ENCODE measurements at regions of chr6 and their contacts with region 1.

Region 1: GRCh38 chr6:70686548-70687133 is 19.0 kb downstream of the SMAP1 start:
- DNase-seq: peak; percentile 16
- H3K4me3 ChIP-seq: no peak overlapping the region
- H3K27ac ChIP-seq: no peak overlapping the region
- H3K4me1 ChIP-seq: no peaks in the 10 kb centered on the region
- H3K27me3 ChIP-seq: no peaks in the 10 kb centered on the region
- CTCF ChIP-seq: peak; percentile 55 to 75

Region 2: GRCh38 chr6:70304616-70305015 is 382.0 kb before region 1 on chr6:
- CTCF ChIA-PET with region 1: no interaction called
- dilution Hi-C with region 1: no loop called
- in situ Hi-C with region 1: loop called in 1 of 2 experiments (anchors 10 kb)
- intact Hi-C with region 1: no loop called
- DNase-seq: no peak
- H3K4me3 ChIP-seq: no peak overlapping the region
- H3K27ac ChIP-seq: no peak overlapping the region
- H3K4me1 ChIP-seq: no peaks in the 10 kb centered on the region
- H3K27me3 ChIP-seq: peaks cover 51% of the 10 kb centered on the region
- CTCF ChIP-seq: no peak

Region 3: GRCh38 chr6:70547313-70547712 is 139.3 kb before region 1 on chr6:
- CTCF ChIA-PET with region 1: no interaction called
- dilution Hi-C with region 1: no loop called
- in situ Hi-C with region 1: no loop called
- intact Hi-C with region 1: loop called (anchors 1 kb)
- DNase-seq: no peak
- H3K4me3 ChIP-seq: no peak overlapping the region
- H3K27ac ChIP-seq: no peak overlapping the region
- H3K4me1 ChIP-seq: no peaks in the 10 kb centered on the region
- H3K27me3 ChIP-seq: no peaks in the 10 kb centered on the region
- CTCF ChIP-seq: peak; percentile 23 to 50

Region 4: DNA sequence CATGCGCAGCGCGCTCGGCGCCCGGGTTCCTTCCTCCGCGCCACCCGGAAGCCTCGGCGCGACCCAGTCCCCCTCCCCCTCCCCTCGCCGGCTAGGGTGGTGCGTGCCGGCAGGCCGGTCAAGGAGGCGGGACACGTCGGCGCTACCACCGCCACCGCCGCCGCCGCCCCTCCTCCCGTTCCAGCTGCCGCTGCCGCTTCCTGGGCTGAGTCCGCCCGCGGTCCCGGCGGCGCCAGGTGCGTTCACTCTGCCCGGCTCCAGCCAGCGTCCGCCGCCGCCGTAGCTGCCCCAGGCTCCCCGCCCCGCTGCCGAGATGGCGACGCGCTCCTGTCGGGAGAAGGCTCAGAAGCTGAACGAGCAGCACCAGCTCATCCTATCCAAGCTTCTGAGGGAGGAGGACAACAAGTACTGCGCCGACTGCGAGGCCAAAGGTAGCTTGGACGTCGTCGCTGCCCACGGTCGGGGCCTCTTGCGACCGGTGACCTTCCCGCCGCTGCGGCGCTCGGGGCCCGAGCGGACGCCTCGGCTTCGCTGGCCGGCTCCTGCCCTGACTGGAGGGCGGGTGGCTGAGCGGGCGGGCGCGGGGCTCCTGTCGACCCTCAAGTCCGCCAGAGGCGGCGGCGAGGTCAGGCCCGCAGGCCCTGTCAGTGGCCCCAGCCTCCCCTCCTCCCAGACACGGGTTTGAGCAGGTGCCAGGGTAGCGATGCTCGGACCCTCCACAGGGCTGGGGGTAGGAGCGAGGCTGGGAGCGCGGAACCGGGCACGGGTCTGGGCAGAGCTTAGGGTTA is 18.7 kb before region 1 on chr6 and contains the start of gene SMAP1:
- CTCF ChIA-PET with region 1: no interaction called
- dilution Hi-C with region 1: no loop called
- in situ Hi-C with region 1: no loop called
- intact Hi-C with region 1: loop called (anchors 2 kb)
- DNase-seq: peak; percentile 90
- H3K4me3 ChIP-seq: peak within 1 kb of the TSS; percentile 77 to 97 (median 92)
- H3K27ac ChIP-seq: peak within 1 kb of the TSS; percentile 45
- H3K4me1 ChIP-seq: peaks cover 13% of the 10 kb centered on the region
- H3K27me3 ChIP-seq: no peaks in the 10 kb centered on the region
- CTCF ChIP-seq: no peak
- total RNA-seq, gene SMAP1: 20.2 to 22.1 TPM

Region 5: DNA sequence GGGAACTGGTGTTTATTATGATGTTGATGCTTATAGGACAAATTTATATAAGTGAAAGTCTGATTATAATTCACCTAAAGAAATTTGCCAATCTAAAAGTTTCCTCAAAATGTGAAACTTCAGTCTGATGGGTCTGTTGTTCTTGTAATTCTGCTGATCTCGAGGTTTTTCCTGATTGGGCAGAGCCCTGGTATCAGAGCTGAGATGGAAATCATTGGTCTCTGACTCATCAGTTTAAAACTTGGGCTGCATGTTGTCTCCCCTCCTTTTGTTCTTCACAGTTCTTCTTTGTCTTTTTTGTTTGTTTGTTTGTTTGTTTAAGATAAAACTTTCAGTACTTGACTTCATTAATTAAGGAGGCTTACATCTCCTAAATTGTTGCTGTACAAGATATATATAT is 13.0 kb before region 1 on chr6:
- CTCF ChIA-PET with region 1: interaction called, 20 read pairs
- dilution Hi-C with region 1: no loop called
- in situ Hi-C with region 1: no loop called
- intact Hi-C with region 1: loop called (anchors 2 kb)
- DNase-seq: peak; percentile 26
- H3K4me3 ChIP-seq: no peak overlapping the region
- H3K27ac ChIP-seq: no peak overlapping the region
- H3K4me1 ChIP-seq: peaks cover 7% of the 10 kb centered on the region
- H3K27me3 ChIP-seq: no peaks in the 10 kb centered on the region
- CTCF ChIP-seq: no peak

Measured in mammary epithelial cell (primary cell).